IMR-90 (cell line): ENCODE measurements at regions of chr6 and their contacts with region 1.

Region 1: DNA sequence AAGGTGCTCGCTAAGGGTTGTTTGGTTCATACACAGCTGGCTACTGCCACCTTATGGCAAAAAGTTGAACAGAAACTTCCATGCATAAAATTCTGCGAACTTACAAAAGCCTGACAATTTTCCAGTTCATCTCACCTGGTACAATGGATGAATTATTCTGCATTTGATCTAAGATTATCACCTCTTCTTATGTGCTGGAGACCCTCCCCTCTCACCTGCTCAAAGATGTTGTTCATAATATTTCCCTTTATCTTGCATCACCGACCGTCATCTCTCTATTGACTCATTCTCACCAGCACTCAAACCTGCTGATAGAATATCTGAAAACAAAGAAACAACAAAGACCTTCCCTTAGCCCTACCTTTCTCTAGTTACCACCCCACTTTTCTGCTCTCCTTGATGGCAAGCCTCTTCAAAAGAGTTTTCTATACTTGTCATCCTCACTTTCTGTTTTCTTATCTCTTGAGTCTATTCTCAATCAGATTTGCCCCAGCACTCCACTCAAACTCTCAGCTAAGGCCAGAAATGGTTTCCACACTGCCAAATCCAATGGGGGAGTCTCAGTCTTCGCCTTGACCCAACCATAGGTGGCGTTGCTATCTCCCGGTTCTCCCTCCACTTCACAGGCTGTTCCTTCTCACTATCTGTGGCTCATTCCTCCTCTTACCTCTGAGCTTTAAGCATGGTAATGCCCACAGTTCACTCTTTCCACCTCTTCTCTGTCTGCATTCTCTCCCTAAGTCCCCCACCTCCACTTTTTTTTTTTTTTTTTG is 25.8 kb downstream of the SNRNP48 start:
- DNase-seq: peak; percentile 65
- ATAC-seq: peak; percentile 66
- H3K4me3 ChIP-seq: peak overlapping the region; percentile 13; the same call in 1 of the 2 replicates
- H3K27ac ChIP-seq: no peak overlapping the region
- H3K4me1 ChIP-seq: peaks cover 4% of the 10 kb centered on the region; the same call in 1 of the 2 replicates
- H3K27me3 ChIP-seq: 0 out of 2 replicates have a peak, but pooled peaks cover 1% of the 10 kb centered on the region
- CTCF ChIP-seq: peak; percentile 82
- POLR2A ChIP-seq: no peak
- RAD21 ChIP-seq: peak; percentile 80

Region 2: DNA sequence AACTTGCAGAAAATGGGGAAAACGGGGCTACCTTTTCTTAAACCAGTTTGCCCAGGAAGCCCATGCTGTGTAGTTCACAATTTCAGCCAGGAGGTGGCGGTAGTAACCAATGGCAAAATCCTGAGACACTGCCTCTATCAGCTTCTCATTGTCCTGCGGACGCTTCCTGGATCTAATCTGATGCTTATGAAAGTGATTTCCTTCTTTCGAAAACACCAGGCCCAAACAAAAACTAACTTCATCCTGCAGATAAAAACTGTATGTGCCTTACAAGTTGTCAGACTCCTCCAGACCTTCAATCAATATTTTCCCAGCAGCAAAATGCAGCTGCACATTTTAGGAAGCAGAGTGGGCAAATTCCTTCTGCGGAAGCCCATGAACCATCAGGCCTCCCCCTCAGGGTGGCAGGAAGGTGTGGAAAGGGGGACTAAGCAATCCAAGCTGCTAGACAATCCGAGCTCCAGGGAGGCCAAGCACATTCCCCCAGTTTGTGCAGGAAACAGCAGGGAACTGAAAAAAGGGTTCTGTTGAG is 938.8 kb before region 1 on chr6:
- CTCF ChIA-PET with region 1: no interaction called
- POLR2A ChIA-PET with region 1: no interaction called
- dilution Hi-C with region 1: no loop called
- in situ Hi-C with region 1: loop called (anchors 25 kb)
- intact Hi-C with region 1: loop called (anchors 5 kb)
- DNase-seq: peak; percentile 69
- ATAC-seq: peak; percentile 98
- H3K4me3 ChIP-seq: no peak overlapping the region
- H3K27ac ChIP-seq: no peak overlapping the region
- H3K4me1 ChIP-seq: peaks cover 2% of the 10 kb centered on the region; the same call in 1 of the 2 replicates
- H3K27me3 ChIP-seq: no peaks in the 10 kb centered on the region; the same call in 1 of the 2 replicates
- CTCF ChIP-seq: peak; percentile 90
- POLR2A ChIP-seq: no peak
- RAD21 ChIP-seq: peak; percentile 88

Region 3: GRCh38 chr6:7276199-7276524 is 339.6 kb before region 1 on chr6:
- CTCF ChIA-PET with region 1: interaction called, 5 read pairs
- POLR2A ChIA-PET with region 1: interaction called, 3 read pairs
- dilution Hi-C with region 1: no loop called
- in situ Hi-C with region 1: loop called (anchors 5 kb)
- intact Hi-C with region 1: loop called (anchors 1 kb)
- DNase-seq: no peak
- ATAC-seq: no peak
- H3K4me3 ChIP-seq: no peak overlapping the region
- H3K27ac ChIP-seq: no peak overlapping the region
- H3K4me1 ChIP-seq: no peaks in the 10 kb centered on the region
- H3K27me3 ChIP-seq: no peaks in the 10 kb centered on the region
- CTCF ChIP-seq: no peak
- POLR2A ChIP-seq: no peak
- RAD21 ChIP-seq: no peak

Region 4: GRCh38 chr6:7282097-7282906 is 333.5 kb before region 1 on chr6:
- CTCF ChIA-PET with region 1: no interaction called
- POLR2A ChIA-PET with region 1: interaction called, 3 read pairs
- dilution Hi-C with region 1: no loop called
- in situ Hi-C with region 1: loop called (anchors 5 kb)
- intact Hi-C with region 1: no loop called
- DNase-seq: no peak
- ATAC-seq: no peak
- H3K4me3 ChIP-seq: no peak overlapping the region
- H3K27ac ChIP-seq: no peak overlapping the region
- H3K4me1 ChIP-seq: no peaks in the 10 kb centered on the region
- H3K27me3 ChIP-seq: no peaks in the 10 kb centered on the region
- CTCF ChIP-seq: no peak
- POLR2A ChIP-seq: no peak
- RAD21 ChIP-seq: no peak

Region 5: GRCh38 chr6:8006208-8006607 is 390.4 kb after region 1 on chr6:
- CTCF ChIA-PET with region 1: no interaction called
- POLR2A ChIA-PET with region 1: no interaction called
- dilution Hi-C with region 1: no loop called
- in situ Hi-C with region 1: no loop called
- intact Hi-C with region 1: loop called (anchors 5 kb)
- DNase-seq: peak; percentile 51
- ATAC-seq: peak; percentile 68; the same call in 1 of the 2 replicates
- H3K4me3 ChIP-seq: no peak overlapping the region
- H3K27ac ChIP-seq: no peak overlapping the region
- H3K4me1 ChIP-seq: no peaks in the 10 kb centered on the region
- H3K27me3 ChIP-seq: no peaks in the 10 kb centered on the region
- CTCF ChIP-seq: peak; percentile 66
- POLR2A ChIP-seq: no peak
- RAD21 ChIP-seq: peak; percentile 75